IMR-90 (cell line): ENCODE measurements at regions of chr2 and their contacts with region 1.

Region 1: DNA sequence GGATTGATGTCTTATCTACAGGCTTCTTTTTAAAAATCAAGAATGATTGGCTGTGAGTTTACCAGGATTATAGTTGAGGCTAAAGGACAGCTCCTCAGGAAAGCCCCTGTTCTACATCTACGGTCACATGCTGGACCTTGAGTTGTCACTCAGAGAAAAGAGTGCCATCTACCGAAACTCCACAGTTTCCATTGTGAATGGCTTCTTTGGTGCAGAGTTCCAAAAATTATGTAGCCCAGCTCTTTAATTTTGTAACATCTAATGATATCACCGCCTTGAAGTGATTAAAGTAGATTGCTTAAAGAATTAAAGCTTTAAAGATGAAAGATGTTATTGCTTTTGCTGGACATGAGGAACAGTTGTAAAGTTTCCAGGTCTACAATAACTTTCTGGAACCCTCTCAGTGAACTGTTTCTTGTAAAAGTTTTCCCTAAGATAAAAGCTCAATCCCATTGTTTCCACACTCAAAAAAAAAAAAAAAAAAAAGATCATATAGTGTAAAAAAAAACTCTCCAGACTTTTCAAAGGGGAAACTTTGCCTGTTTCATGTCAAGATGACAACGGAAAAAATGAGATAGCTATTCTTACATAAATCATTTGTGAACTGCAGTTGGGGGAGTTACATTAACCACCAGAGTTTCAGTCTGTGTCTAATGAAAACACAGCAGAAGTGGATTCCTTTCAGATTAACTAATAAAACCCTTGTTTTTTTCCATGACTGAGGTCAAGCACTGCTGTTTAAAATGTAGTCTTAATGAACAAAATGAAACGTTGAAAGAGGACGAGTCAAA is 4.3 kb downstream of the COL3A1 start:
- DNase-seq: peak; percentile 69
- ATAC-seq: peak; percentile 12; the same call in 1 of the 2 replicates
- H3K4me3 ChIP-seq: peak overlapping the region; percentile 19
- H3K27ac ChIP-seq: peak overlapping the region; percentile 74; the same call in 1 of the 2 replicates
- H3K4me1 ChIP-seq: peaks cover 3% of the 10 kb centered on the region
- H3K27me3 ChIP-seq: no peaks in the 10 kb centered on the region
- CTCF ChIP-seq: peak; percentile 43
- POLR2A ChIP-seq: no peak
- RAD21 ChIP-seq: peak; percentile 51

Region 2: DNA sequence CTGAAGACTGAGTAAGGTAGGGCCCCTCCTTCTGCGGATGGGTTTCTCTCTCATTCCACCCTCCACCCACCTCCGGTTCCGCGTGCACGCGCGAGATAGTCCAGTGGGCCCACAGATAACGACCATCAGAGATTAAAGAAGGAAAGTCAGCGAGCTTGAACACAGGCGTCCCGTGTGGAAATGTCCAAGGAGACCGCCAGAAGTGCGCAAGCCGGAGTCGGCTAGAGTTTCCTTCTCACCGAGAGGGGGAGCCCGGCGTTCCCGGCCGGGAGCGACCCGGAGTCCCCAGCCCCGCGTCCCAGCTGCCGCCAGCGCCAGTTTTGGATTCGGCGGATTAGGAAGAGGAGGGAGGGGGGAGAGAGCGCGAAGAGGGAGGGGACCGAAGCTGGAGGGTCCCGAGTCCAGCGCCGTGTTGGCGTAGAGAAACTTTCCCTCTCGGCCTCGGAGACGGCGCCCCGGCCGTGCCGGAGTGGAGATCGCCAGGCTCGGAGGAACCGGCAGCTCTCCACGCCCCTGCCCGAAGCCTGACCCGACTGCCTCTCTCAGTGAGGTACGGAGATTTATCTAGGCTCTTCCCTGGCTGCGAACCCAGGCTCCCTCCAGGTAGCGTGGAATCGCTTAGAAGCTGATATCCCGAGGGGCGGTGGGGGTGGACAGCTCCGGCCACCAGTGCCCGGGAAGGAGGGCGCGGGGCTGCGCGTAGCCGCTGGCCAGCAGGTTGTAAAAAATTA is 686.7 kb before region 1 on chr2 and contains the start of gene GULP1:
- CTCF ChIA-PET with region 1: no interaction called
- POLR2A ChIA-PET with region 1: no interaction called
- dilution Hi-C with region 1: no loop called
- in situ Hi-C with region 1: no loop called
- intact Hi-C with region 1: loop called (anchors 10 kb)
- DNase-seq: peak; percentile 75
- ATAC-seq: peak; percentile 74
- H3K4me3 ChIP-seq: peak within 1 kb of the TSS; percentile 77
- H3K27ac ChIP-seq: peak within 1 kb of the TSS; percentile 97
- H3K4me1 ChIP-seq: no peaks in the 10 kb centered on the region
- H3K27me3 ChIP-seq: no peaks in the 10 kb centered on the region
- CTCF ChIP-seq: peak; percentile 65
- POLR2A ChIP-seq: peak; percentile 42; the same call in 1 of the 2 replicates
- RAD21 ChIP-seq: peak; percentile 65
- total RNA-seq, gene GULP1: 40.1 and 54.4 TPM in 2 replicates

Region 3: DNA sequence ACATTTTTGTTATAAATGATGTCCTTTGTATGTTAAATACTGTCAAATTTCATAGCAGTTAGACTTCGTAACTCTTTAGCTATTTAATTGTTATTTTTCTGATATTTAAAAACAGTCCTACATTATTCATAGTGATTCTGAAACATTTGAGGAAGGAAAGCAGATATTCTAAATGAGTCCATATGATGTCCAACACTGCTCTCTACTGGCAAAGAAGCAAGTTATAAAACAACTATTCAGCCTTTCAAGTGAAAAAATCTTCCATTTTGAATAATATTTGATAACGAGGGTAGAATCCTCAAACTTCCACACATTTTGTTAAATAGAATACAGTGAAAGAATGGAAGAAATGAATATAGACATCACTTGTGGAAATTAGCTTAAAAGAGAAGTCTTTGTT is 466.0 kb before region 1 on chr2:
- CTCF ChIA-PET with region 1: no interaction called
- POLR2A ChIA-PET with region 1: no interaction called
- dilution Hi-C with region 1: no loop called
- in situ Hi-C with region 1: no loop called
- intact Hi-C with region 1: no loop called
- DNase-seq: peak; percentile 77
- ATAC-seq: peak; percentile 84
- H3K4me3 ChIP-seq: no peak overlapping the region
- H3K27ac ChIP-seq: no peak overlapping the region
- H3K4me1 ChIP-seq: no peaks in the 10 kb centered on the region
- H3K27me3 ChIP-seq: no peaks in the 10 kb centered on the region
- CTCF ChIP-seq: peak; percentile 80
- POLR2A ChIP-seq: peak; percentile 24; the same call in 1 of the 2 replicates
- RAD21 ChIP-seq: peak; percentile 94

Region 4: GRCh38 chr2:188659656-188660406 is 318.7 kb before region 1 on chr2:
- CTCF ChIA-PET with region 1: no interaction called
- POLR2A ChIA-PET with region 1: no interaction called
- dilution Hi-C with region 1: no loop called
- in situ Hi-C with region 1: no loop called
- intact Hi-C with region 1: loop called (anchors 5 kb)
- DNase-seq: peak; percentile 74
- ATAC-seq: peak; percentile 90
- H3K4me3 ChIP-seq: no peak overlapping the region
- H3K27ac ChIP-seq: peak overlapping the region; percentile 19; the same call in 1 of the 2 replicates
- H3K4me1 ChIP-seq: no peaks in the 10 kb centered on the region
- H3K27me3 ChIP-seq: no peaks in the 10 kb centered on the region
- CTCF ChIP-seq: no peak
- POLR2A ChIP-seq: no peak
- RAD21 ChIP-seq: no peak

Region 5: DNA sequence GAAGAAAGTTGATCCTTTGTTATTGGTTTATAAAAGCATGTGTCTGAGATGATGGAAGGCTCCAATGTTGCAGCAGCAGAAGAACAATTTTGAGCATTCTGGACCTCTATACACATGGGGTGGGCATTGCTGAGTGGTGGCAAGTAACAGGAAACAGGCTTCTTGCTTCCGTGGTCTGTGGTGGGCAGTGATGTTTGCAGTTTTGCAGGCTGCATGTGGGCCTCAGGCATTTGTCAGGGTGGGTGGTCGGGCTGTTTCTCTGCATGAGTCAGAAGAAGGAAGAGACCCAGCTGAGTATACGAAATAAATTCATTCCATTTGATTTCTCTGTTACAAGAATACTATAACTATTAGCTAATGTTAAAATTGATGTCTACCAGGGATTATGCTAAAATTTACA is 243.8 kb before region 1 on chr2:
- CTCF ChIA-PET with region 1: no interaction called
- POLR2A ChIA-PET with region 1: no interaction called
- dilution Hi-C with region 1: no loop called
- in situ Hi-C with region 1: no loop called
- intact Hi-C with region 1: no loop called
- DNase-seq: peak; percentile 33
- ATAC-seq: peak; percentile 24; the same call in 1 of the 2 replicates
- H3K4me3 ChIP-seq: no peak overlapping the region
- H3K27ac ChIP-seq: no peak overlapping the region
- H3K4me1 ChIP-seq: no peaks in the 10 kb centered on the region
- H3K27me3 ChIP-seq: no peaks in the 10 kb centered on the region
- CTCF ChIP-seq: no peak
- POLR2A ChIP-seq: no peak
- RAD21 ChIP-seq: no peak

Region 6: DNA sequence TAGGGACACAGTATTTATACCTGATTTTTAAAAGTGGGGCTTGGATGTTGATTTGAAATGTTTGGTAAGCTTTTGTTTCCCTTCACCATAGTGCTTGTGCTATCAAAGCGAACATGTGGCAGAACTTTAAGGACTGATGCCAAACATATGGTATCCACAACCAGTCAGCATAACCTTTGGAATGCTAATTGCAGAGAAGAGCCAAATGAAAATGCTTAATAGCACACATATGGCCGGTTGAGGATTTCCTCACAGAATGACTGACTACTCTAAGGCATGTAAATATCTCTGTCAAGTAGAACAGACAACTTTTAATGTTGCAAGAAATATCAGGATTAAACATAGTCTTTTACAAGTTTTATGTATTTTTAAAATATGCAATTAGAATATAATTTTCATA is 125.2 kb before region 1 on chr2:
- CTCF ChIA-PET with region 1: no interaction called
- POLR2A ChIA-PET with region 1: no interaction called
- dilution Hi-C with region 1: no loop called
- in situ Hi-C with region 1: no loop called
- intact Hi-C with region 1: loop called (anchors 5 kb)
- DNase-seq: peak; percentile 96
- ATAC-seq: peak; percentile 95
- H3K4me3 ChIP-seq: no peak overlapping the region
- H3K27ac ChIP-seq: peak overlapping the region; percentile 54; the same call in 1 of the 2 replicates
- H3K4me1 ChIP-seq: no peaks in the 10 kb centered on the region; the same call in 1 of the 2 replicates
- H3K27me3 ChIP-seq: no peaks in the 10 kb centered on the region
- CTCF ChIP-seq: no peak
- POLR2A ChIP-seq: no peak
- RAD21 ChIP-seq: no peak

Region 7: GRCh38 chr2:188870289-188870688 is 108.2 kb before region 1 on chr2:
- CTCF ChIA-PET with region 1: no interaction called
- POLR2A ChIA-PET with region 1: no interaction called
- dilution Hi-C with region 1: no loop called
- in situ Hi-C with region 1: no loop called
- intact Hi-C with region 1: no loop called
- DNase-seq: peak; percentile 97
- ATAC-seq: peak; percentile 81
- H3K4me3 ChIP-seq: no peak overlapping the region
- H3K27ac ChIP-seq: no peak overlapping the region; the same call in 1 of the 2 replicates
- H3K4me1 ChIP-seq: peaks cover 5% of the 10 kb centered on the region
- H3K27me3 ChIP-seq: no peaks in the 10 kb centered on the region
- CTCF ChIP-seq: no peak
- POLR2A ChIP-seq: no peak
- RAD21 ChIP-seq: no peak

Region 8: DNA sequence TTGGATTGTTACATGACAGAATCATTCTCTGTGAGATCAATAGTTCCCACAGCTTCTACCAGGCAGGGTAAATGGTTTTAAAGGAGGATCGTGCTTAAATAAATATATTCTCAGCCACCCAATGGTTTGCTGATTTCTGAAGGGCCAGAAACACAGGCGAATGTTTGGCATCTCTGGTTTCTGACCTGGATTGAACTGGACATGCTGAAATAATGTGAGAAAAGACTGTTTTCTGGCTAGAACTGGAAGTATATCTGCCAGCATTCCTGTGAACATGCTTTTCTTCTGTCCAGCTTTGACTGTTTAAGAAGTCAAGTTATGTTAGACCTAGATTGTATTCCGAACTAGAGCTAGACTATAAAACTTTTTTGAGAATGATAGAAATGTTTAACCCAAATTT is 81.4 kb before region 1 on chr2:
- CTCF ChIA-PET with region 1: no interaction called
- POLR2A ChIA-PET with region 1: no interaction called
- dilution Hi-C with region 1: no loop called
- in situ Hi-C with region 1: no loop called
- intact Hi-C with region 1: loop called (anchors 5 kb)
- DNase-seq: peak; percentile 65
- ATAC-seq: peak; percentile 52
- H3K4me3 ChIP-seq: no peak overlapping the region
- H3K27ac ChIP-seq: peak overlapping the region; percentile 84
- H3K4me1 ChIP-seq: peaks cover 7% of the 10 kb centered on the region; the same call in 1 of the 2 replicates
- H3K27me3 ChIP-seq: no peaks in the 10 kb centered on the region
- CTCF ChIP-seq: no peak
- POLR2A ChIP-seq: no peak
- RAD21 ChIP-seq: no peak

Region 9: GRCh38 chr2:189347540-189347939 is 369.1 kb after region 1 on chr2:
- CTCF ChIA-PET with region 1: no interaction called
- POLR2A ChIA-PET with region 1: no interaction called
- dilution Hi-C with region 1: no loop called
- in situ Hi-C with region 1: no loop called
- intact Hi-C with region 1: loop called (anchors 1 kb)
- DNase-seq: peak; percentile 96
- ATAC-seq: peak; percentile 90
- H3K4me3 ChIP-seq: no peak overlapping the region
- H3K27ac ChIP-seq: peak overlapping the region; percentile 89; the same call in 1 of the 2 replicates
- H3K4me1 ChIP-seq: peaks cover 8% of the 10 kb centered on the region
- H3K27me3 ChIP-seq: no peaks in the 10 kb centered on the region
- CTCF ChIP-seq: peak; percentile 65
- POLR2A ChIP-seq: no peak
- RAD21 ChIP-seq: peak; percentile 89

Region 10: GRCh38 chr2:189802396-189802912 is 824.0 kb after region 1 on chr2:
- CTCF ChIA-PET with region 1: no interaction called
- POLR2A ChIA-PET with region 1: no interaction called
- dilution Hi-C with region 1: no loop called
- in situ Hi-C with region 1: no loop called
- intact Hi-C with region 1: no loop called
- DNase-seq: peak; percentile 27
- ATAC-seq: no peak
- H3K4me3 ChIP-seq: no peak overlapping the region
- H3K27ac ChIP-seq: no peak overlapping the region
- H3K4me1 ChIP-seq: peaks cover 8% of the 10 kb centered on the region; the same call in 1 of the 2 replicates
- H3K27me3 ChIP-seq: no peaks in the 10 kb centered on the region
- CTCF ChIP-seq: no peak
- POLR2A ChIP-seq: no peak
- RAD21 ChIP-seq: no peak